ENCODE measurements at regions of chr17 and their contacts with region 1.

Region 1: DNA sequence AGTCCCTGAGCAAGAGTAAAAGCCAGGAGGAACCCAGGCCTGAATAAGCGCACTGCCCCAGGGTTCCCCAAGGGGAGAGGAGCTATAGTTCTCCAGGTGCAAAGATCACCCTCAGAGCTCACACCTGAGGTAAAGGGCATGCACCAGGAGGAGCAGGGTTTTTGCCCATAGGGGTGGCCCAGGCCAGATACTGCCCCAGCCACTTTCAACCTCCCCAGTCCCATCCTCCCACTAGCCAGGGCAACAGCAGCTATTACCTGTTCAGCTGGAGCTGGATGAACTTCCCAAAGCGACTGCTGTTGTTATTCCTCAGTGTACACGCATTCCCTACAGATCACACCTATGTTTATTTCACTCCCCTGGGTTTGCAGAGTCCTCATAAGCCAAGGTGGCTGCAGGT is 19.8 kb downstream of the MYO19 start:
- DNase-seq: no peak
- ATAC-seq: no peak
- H3K4me3 Mint-ChIP-seq: no peak overlapping the region
- H3K27ac Mint-ChIP-seq: no peak overlapping the region
- H3K4me1 Mint-ChIP-seq: no peaks in the 10 kb centered on the region
- H3K27me3 Mint-ChIP-seq: no peaks in the 10 kb centered on the region
- CTCF ChIP-seq: no peak

Region 2: DNA sequence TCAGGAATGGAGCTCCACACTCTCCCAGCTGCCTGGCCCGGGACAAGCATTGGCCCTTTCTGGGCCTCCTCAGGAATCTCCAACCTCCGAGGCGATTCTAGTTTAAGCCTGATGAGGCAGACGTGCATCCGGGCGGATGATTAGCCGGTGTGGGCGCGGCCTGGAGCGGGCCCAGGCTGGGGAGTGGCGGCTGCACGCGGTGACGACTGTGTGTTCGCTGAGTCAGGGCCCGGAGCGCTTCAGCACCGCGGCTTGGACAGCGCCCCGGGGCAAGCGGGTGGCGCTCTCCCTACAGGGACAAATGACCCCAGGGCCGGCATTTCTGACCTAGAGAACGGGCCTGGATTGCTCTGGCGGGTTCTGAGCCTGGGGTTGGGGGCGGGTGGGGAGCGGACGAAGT is 50.9 kb before region 1 on chr17:
- CTCF ChIA-PET with region 1: no interaction called
- POLR2A ChIA-PET with region 1: no interaction called
- intact Hi-C with region 1: no loop called
- DNase-seq: peak; percentile 83
- ATAC-seq: peak; percentile 100
- H3K4me3 Mint-ChIP-seq: no peak overlapping the region
- H3K27ac Mint-ChIP-seq: no peak overlapping the region
- H3K4me1 Mint-ChIP-seq: no peaks in the 10 kb centered on the region
- H3K27me3 Mint-ChIP-seq: peaks cover 45% of the 10 kb centered on the region
- CTCF ChIP-seq: no peak

Region 3: DNA sequence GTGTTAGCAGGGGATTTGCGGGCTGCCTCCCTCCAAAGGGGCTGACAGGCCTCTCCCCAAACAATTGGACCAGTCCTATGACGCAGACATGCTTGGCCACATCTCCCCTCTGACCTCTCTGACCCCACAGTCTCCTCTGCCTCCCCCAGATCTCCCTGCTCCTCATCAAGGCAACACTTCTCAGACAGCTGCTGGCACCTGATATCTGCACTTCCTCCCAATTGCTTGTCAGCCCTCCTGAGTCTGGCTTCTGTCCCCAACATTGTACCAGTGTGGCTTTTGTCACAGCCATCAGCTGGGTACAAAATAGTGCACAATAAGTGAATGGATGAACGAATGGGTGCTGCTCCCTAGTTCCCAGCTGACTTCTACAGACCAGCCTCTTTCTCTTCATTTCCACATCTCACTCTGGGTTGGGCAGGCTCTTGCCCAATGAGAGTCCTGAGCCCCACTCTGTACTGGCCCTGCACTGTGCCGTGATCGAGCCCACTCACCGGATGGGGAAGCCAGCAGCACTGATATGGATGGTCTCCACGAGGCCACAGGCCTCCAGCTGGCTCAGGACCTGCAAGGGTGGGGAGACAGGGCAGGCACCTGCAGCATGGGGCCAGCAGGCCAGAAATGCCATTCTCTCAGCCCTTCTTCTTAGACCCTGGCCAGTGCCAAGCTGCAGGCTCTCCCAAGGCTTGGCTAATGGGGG is 11.2 kb before region 1 on chr17:
- CTCF ChIA-PET with region 1: no interaction called
- POLR2A ChIA-PET with region 1: interaction called, 16 read pairs
- intact Hi-C with region 1: no loop called
- DNase-seq: no peak
- ATAC-seq: no peak
- H3K4me3 Mint-ChIP-seq: no peak overlapping the region
- H3K27ac Mint-ChIP-seq: peak overlapping the region; percentile 54
- H3K4me1 Mint-ChIP-seq: peaks cover 6% of the 10 kb centered on the region
- H3K27me3 Mint-ChIP-seq: no peaks in the 10 kb centered on the region
- CTCF ChIP-seq: no peak

Region 4: DNA sequence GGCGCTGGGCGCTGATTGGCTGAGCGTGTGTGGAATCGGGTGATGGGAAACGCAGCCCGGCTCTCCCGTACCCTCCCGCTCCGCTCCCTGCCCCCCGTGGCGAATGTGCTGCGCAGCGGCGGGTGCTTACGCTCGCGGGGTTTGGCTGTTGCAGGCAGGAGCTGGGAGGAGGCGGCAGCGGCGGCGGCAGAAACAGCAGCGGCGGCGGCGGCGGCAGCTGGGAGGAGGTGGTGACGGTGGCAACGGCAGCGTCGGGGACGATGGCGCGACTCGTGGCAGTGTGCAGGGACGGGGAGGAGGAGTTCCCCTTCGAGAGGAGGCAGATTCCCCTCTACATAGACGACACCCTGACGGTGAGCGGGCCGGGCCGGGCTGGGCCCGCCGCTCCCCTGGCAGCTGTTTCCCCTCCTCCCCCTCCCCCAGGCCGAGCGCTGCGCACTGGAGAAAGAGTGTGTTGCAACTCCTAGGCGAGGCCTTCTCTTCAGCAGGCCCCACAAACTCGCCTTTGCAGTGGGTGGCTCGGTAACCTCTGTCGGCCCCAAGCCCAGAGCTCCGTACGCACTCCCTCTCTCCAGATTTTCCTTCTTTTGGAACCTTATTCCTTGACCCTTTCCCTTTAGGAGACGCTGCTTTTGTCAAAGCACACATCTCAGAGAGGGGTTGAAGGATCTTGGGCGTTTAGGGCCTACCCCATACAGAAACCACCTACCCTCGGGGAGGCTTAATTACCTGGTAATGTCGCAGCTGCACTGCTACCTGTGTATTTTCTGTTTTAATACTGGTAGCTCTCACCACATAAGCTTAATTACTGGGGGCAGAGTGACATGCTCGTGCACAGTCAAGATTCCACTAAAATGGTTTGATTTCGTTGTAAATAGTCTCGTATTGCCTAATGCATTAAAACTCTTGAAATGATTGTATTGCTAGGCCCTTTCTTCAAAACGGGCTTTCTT is 30.9 kb after region 1 on chr17:
- CTCF ChIA-PET with region 1: no interaction called
- POLR2A ChIA-PET with region 1: no interaction called
- intact Hi-C with region 1: no loop called
- DNase-seq: peak; percentile 97
- ATAC-seq: peak; percentile 78
- H3K4me3 Mint-ChIP-seq: peak overlapping the region; percentile 98
- H3K27ac Mint-ChIP-seq: peak overlapping the region; percentile 96
- H3K4me1 Mint-ChIP-seq: peaks cover 33% of the 10 kb centered on the region
- H3K27me3 Mint-ChIP-seq: no peaks in the 10 kb centered on the region
- CTCF ChIP-seq: no peak